ENCODE measurements at regions of chr2 and their contacts with region 1.

Region 1: GRCh38 chr2:69643602-69644505 is at the start of gene AAK1:
- DNase-seq: peak; percentile 91
- H3K4me3 Mint-ChIP-seq: peak within 1 kb of the TSS; percentile 86
- H3K27ac Mint-ChIP-seq: peak within 1 kb of the TSS; percentile 99
- H3K4me1 Mint-ChIP-seq: peaks cover 52% of the 10 kb centered on the region
- H3K27me3 Mint-ChIP-seq: no peaks in the 10 kb centered on the region
- total RNA-seq, gene AAK1: 95.2 to 99.3 TPM

Region 2: GRCh38 chr2:69386789-69387734 is 256.8 kb before region 1 on chr2 and contains the start of gene GFPT1:
- CTCF ChIA-PET with region 1: no interaction called
- POLR2A ChIA-PET with region 1: no interaction called
- intact Hi-C with region 1: loop called (anchors 10 kb)
- DNase-seq: peak; percentile 95
- H3K4me3 Mint-ChIP-seq: peak within 1 kb of the TSS; percentile 85
- H3K27ac Mint-ChIP-seq: peak within 1 kb of the TSS; percentile 80
- H3K4me1 Mint-ChIP-seq: peaks cover 39% of the 10 kb centered on the region
- H3K27me3 Mint-ChIP-seq: no peaks in the 10 kb centered on the region
- total RNA-seq, gene GFPT1: 39.8 to 43.6 TPM

Region 3: DNA sequence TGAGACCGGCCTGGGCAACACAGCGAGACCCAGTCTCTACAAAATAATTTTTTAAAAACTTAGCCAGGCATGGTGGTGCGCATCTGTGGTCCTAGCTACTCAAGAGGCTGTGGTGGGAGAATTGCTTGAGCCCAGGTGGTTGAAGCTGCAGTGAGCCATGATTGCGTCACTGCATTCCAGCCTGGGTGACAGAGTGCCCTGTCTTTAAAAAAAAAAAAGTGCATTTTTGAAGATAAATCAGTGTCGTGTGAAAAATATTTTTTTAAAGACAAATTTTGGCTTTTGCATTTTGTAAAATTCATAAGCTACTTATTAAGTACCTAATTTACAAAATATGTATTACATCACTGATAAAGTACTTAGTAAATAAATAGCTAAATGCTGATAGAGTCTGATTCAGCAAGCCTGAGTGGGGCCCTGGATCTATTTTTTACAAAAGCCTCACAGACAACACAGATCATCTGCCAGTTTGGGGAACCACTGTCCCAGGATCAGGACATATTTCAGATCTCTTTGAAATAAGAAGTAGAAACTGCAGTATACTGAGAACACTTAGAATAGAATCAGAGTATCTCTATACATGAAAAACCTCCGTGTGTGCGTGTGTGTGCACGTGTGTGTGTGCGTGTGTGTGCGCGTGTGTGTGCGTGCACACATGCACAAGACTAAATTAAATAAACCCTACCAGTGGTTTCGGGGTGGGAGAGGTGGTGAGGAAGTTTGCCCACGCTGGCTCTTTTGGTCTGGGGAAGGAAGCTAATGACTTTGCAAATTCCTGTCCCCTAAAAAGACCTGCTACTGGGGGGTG is 61.9 kb before region 1 on chr2:
- CTCF ChIA-PET with region 1: interaction called, 3 read pairs
- POLR2A ChIA-PET with region 1: interaction called, 7 read pairs
- intact Hi-C with region 1: loop called (anchors 2 kb)
- DNase-seq: no peak
- H3K4me3 Mint-ChIP-seq: no peak overlapping the region
- H3K27ac Mint-ChIP-seq: peak overlapping the region; percentile 38
- H3K4me1 Mint-ChIP-seq: peaks cover 90% of the 10 kb centered on the region
- H3K27me3 Mint-ChIP-seq: no peaks in the 10 kb centered on the region

Region 4: DNA sequence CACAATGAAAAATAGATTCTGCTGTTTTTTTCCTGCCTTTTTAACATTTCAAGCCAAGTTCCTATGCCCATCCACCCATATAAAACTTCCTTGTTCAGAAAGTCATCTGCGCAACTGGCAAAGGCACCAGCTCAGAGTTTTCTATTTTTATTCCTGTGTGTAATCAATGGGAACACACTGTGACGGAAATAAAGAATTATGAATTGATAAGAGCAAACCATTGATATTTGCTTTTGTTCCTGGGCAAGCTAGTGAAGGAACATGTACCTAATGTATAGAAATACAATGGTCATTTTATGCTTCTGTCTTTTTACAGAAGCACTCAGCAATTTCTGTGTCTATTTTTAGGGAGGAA is 30.4 kb after region 1 on chr2:
- CTCF ChIA-PET with region 1: no interaction called
- POLR2A ChIA-PET with region 1: interaction called, 10 read pairs
- intact Hi-C with region 1: loop called (anchors 1 kb)
- DNase-seq: no peak
- H3K4me3 Mint-ChIP-seq: no peak overlapping the region
- H3K27ac Mint-ChIP-seq: no peak overlapping the region
- H3K4me1 Mint-ChIP-seq: peaks cover 27% of the 10 kb centered on the region
- H3K27me3 Mint-ChIP-seq: no peaks in the 10 kb centered on the region

Region 5: DNA sequence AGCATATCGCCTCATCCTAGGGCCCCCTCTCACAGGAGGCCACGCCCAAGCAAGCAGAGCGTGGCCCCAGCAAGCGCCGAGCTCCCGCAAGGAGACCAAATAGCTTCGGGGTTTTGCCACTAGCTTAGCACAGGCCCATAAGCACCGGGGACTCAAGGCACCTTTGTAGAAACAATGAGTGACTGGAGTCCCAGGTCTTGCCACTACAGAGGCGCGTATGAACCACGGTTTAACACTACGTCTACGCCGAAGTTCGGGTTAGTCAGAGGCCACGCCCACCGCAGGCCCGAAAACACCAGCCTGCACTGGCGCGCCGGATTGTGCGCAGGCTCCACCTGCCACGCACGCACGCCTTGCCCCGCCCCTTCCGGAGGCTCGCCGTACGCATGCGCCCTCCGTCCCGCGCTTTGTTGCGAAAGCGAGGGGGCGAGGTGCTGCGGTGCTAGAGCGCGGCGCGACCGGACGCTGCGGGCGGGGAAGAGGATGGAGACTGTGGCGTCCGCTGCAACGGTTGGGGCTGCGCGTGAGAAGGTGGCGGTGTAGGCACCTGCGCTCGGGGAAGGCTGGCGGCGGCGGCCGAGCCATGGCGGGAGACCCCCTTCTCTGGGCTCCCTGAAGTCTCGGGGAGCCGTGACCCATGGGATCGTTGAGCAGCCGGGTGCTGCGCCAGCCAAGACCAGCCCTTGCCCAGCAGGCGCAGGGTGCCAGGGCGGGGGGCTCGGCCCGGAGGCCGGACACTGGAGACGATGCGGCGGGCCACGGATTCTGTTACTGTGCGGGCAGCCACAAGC is 185.6 kb after region 1 on chr2 and contains the start of gene GMCL1:
- CTCF ChIA-PET with region 1: no interaction called
- POLR2A ChIA-PET with region 1: no interaction called
- intact Hi-C with region 1: loop called (anchors 2 kb)
- DNase-seq: peak; percentile 99
- H3K4me3 Mint-ChIP-seq: peak within 1 kb of the TSS; percentile 81
- H3K27ac Mint-ChIP-seq: peak within 1 kb of the TSS; percentile 92
- H3K4me1 Mint-ChIP-seq: peaks cover 40% of the 10 kb centered on the region
- H3K27me3 Mint-ChIP-seq: no peaks in the 10 kb centered on the region
- total RNA-seq, gene GMCL1: 20.6 to 22.1 TPM

Region 6: DNA sequence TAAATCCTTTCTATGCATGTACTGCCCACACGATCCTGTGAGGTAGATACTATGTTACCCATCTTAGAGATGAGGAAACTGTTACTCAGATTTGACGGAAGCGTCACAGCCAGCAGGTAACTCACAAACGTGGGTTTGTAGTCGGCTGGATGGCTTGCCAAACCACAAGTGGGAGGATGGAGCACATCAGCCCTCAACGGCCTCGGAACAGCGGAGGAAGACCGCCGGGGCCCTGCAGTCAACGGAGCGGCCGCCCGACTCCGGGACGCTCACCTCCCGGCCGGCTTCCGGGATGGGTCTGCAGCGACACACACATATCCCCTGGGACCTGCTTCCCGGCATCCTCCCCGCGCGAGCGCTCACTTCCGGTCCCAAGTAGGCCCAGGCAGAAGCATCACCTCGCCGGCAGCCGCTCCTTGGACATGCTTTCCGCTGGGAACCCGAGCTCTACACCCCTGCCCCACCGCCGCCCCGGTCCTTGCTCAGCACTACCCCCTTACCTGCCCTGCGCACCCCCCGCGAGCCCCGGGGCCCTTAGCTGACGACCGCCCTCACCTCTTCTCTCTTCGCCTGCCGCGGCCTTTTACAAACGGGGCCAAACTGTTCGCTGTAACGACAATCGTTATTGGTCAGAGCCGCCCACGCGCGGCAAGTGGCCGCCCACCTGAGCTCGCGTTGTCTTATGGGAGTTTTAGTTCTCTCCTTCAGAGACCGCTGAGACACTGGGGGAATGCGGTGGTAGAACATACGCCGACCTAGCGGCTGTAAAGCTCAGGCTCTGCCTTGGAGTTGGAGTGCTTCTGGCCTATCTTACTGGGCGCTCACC is 546.8 kb after region 1 on chr2 and contains the start of gene C2orf42:
- CTCF ChIA-PET with region 1: no interaction called
- POLR2A ChIA-PET with region 1: no interaction called
- intact Hi-C with region 1: loop called (anchors 5 kb)
- DNase-seq: peak; percentile 98
- H3K4me3 Mint-ChIP-seq: peak within 1 kb of the TSS; percentile 97
- H3K27ac Mint-ChIP-seq: peak within 1 kb of the TSS; percentile 99
- H3K4me1 Mint-ChIP-seq: peaks cover 20% of the 10 kb centered on the region
- H3K27me3 Mint-ChIP-seq: peaks cover 1% of the 10 kb centered on the region
- total RNA-seq, gene C2orf42: 23.5 to 23.9 TPM